ENCODE measurements at regions of chr11 and their contacts with region 1.

Region 1: GRCh38 chr11:62665075-62665598 is at the starts of genes C11orf98 and CSKMT:
- DNase-seq: peak; percentile 91 to 97 (median 94)
- ATAC-seq: peak; percentile 87
- H3K4me3 ChIP-seq: peak within 1 kb of the TSS; percentile 73
- H3K27ac ChIP-seq: peak within 1 kb of the TSS; percentile 80
- H3K4me1 ChIP-seq: peaks cover 19 to 41% of the 10 kb centered on the region in 2 experiments; a peak in 4 of 5 replicates
- H3K27me3 ChIP-seq: no peaks in the 10 kb centered on the region
- CTCF ChIP-seq: no peak
- EP300 ChIP-seq: no peak
- POLR2A ChIP-seq: peak; percentile 100
- RAD21 ChIP-seq: peak in 1 of 2 experiments; percentile 8; a peak in 1 of 4 replicates
- polyA plus RNA-seq, gene C11orf98: 164 to 246 TPM
- polyA plus RNA-seq, gene CSKMT: 26.4 to 31.8 TPM

Region 2: DNA sequence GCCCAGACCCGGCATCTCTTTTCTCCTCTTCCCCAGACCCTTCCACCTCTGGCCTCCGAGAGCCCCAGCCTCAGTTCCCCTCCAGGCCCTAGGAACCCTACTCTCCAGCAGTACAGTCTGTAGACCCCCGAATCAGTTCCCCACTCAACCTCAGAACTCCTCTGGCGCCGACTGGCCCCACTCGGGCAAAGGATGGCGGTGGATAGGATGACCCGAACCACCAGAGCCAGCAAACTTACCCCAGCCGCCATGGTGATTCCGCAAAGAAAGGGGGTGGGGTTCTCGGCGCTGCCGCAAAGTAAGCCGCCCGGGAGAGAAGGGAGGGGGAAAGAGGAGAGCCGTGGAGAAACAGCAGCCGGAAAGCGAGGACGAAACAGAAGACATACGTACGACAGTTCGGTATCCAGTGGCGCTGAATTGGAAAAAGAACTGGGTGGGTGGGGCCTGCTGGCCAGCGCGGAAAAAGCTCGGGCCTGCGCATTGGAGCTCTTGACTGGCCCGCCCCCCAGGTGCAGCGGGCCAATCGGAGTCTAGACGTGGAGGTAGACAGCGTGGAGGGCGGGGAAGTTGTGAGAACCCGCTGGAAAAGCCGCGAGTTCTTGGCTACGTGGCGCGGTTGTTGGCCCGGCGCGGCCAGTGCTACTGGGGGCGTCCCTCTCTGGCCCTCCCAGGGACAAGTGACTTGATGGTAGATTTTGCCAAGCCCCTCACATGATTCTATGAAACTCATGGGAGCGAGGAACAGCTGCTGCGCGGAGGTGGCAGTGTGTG is 91.4 kb before region 1 on chr11 and contains the start of gene EEF1G:
- CTCF ChIA-PET with region 1: no interaction called
- POLR2A ChIA-PET with region 1: interaction called, 12 read pairs
- in situ Hi-C with region 1: no loop called
- intact Hi-C with region 1: no loop called
- DNase-seq: peak; percentile 97 to 99 (median 98)
- ATAC-seq: peak; percentile 97
- H3K4me3 ChIP-seq: peak within 1 kb of the TSS; percentile 96
- H3K27ac ChIP-seq: peak within 1 kb of the TSS; percentile 88
- H3K4me1 ChIP-seq: peaks cover 22 to 40% of the 10 kb centered on the region in 2 experiments; a peak in 4 of 5 replicates
- H3K27me3 ChIP-seq: no peaks in the 10 kb centered on the region
- CTCF ChIP-seq: no peak
- EP300 ChIP-seq: no peak
- POLR2A ChIP-seq: peak; percentile 97
- RAD21 ChIP-seq: no peak
- polyA plus RNA-seq, gene EEF1G: 985 to 1,460 TPM

Region 3: GRCh38 chr11:62621567-62622470 is 43.3 kb before region 1 on chr11 and contains the start of gene B3GAT3:
- CTCF ChIA-PET with region 1: no interaction called
- POLR2A ChIA-PET with region 1: interaction called, 24 read pairs
- in situ Hi-C with region 1: no loop called
- intact Hi-C with region 1: no loop called
- DNase-seq: peak; percentile 97 to 99 (median 98)
- ATAC-seq: peak; percentile 98
- H3K4me3 ChIP-seq: peak within 1 kb of the TSS; percentile 73
- H3K27ac ChIP-seq: peak within 1 kb of the TSS; percentile 84
- H3K4me1 ChIP-seq: peaks cover 12 to 13% of the 10 kb centered on the region in 2 experiments; a peak in 4 of 5 replicates
- H3K27me3 ChIP-seq: no peaks in the 10 kb centered on the region
- CTCF ChIP-seq: peak in 2 of 3 experiments; percentile 8 to 28; a peak in 1 of 6 replicates
- EP300 ChIP-seq: no peak; the same call in 1 of the 2 replicates
- POLR2A ChIP-seq: peak; percentile 79
- RAD21 ChIP-seq: no peak
- polyA plus RNA-seq, gene B3GAT3: 0.30 to 3.3 TPM

Region 4: DNA sequence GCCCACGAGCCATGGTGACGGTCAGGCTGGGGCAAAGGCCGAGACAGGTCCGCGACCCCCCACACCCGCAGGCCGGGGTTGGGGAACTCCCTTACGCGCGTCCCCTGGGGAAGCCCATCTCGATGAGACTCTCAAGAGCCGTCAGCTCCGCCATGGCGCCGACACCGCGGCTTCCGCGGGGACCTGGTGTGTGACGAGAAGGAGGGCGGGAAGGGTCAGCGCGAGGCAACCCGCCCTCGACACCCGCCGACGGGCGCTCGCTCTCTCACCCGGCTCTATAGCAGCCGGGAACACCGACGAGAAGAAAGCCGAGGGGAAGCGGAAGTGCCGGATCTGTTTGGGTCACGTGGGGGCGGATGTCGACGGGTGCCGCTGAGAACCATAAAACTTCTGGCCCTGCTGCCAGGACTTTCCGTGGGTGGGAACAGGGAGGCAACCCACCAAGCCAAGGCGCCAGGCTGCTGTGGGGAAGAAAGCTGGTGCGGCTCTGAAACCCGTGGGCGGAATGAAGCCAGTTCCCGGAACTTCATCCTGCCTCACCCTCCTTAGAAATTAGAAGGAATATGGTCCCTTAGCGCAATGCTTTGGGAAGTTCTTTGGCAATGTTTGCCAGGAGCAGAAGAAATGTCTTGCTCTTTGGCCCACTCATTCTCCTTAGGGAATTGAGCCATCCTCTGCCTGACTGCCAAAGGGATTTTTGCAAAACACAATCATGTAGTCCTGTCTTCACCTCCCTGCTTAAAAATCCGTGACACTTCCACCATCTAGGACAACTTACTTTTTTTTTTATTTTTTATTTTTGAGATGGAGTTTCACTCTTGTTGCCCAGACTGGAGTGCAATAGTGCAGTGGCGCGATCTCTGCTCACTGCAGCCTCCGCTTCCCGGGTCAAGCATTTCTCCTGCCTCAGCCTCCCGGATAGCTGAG is 13.9 kb after region 1 on chr11 and contains the start of gene UBXN1:
- CTCF ChIA-PET with region 1: no interaction called
- POLR2A ChIA-PET with region 1: interaction called, 57 read pairs
- in situ Hi-C with region 1: no loop called
- intact Hi-C with region 1: no loop called
- DNase-seq: peak; percentile 86 to 94 (median 88)
- ATAC-seq: peak; percentile 85
- H3K4me3 ChIP-seq: peak within 1 kb of the TSS; percentile 81
- H3K27ac ChIP-seq: peak within 1 kb of the TSS; percentile 80
- H3K4me1 ChIP-seq: peaks cover 25 to 43% of the 10 kb centered on the region in 2 experiments; a peak in 4 of 5 replicates
- H3K27me3 ChIP-seq: no peaks in the 10 kb centered on the region
- CTCF ChIP-seq: no peak
- EP300 ChIP-seq: no peak; the same call in 1 of the 2 replicates
- POLR2A ChIP-seq: peak; percentile 88
- RAD21 ChIP-seq: 0 out of 4 replicates have a peak, but pooled peaks of 1 of the 2 experiments have one; percentile 5
- polyA plus RNA-seq, gene UBXN1: 4.8 to 10.4 TPM

Region 5: GRCh38 chr11:62726915-62727763 is 62.0 kb after region 1 on chr11 and contains the start of gene HNRNPUL2:
- CTCF ChIA-PET with region 1: no interaction called
- POLR2A ChIA-PET with region 1: interaction called, 11 read pairs
- in situ Hi-C with region 1: no loop called
- intact Hi-C with region 1: no loop called
- DNase-seq: peak; percentile 94 to 99 (median 96)
- ATAC-seq: peak; percentile 90
- H3K4me3 ChIP-seq: peak within 1 kb of the TSS; percentile 90
- H3K27ac ChIP-seq: peak within 1 kb of the TSS; percentile 99
- H3K4me1 ChIP-seq: peaks cover 13 to 19% of the 10 kb centered on the region in 2 experiments; a peak in 4 of 5 replicates
- H3K27me3 ChIP-seq: no peaks in the 10 kb centered on the region
- CTCF ChIP-seq: peak in 1 of 3 experiments; percentile 40; a peak in 2 of 6 replicates
- EP300 ChIP-seq: peak; percentile 0; the same call in 1 of the 2 replicates
- POLR2A ChIP-seq: peak; percentile 95
- RAD21 ChIP-seq: no peak
- polyA plus RNA-seq, gene HNRNPUL2: 0.89 to 1.4 TPM

Region 6: DNA sequence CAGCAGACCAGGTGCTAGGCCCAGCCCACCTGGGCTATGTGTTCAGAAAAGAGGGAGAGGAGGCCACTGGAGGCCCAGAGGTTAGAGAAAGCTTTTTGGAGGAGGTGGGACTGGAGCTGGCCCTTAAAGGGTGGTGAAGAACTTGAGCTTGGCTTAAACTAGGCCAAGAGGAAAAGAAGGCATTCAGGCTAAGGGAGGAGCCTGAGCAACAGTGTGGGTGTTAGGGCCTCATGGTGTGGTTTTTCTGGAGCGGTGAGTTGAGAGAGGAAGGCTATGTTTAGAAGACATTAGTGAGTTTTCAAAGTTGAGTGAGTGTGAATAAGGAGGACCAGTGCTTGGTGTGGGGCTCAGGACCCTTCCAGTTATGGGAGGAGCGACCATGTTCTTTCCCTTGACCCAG is 112.3 kb after region 1 on chr11:
- CTCF ChIA-PET with region 1: no interaction called
- POLR2A ChIA-PET with region 1: no interaction called
- in situ Hi-C with region 1: no loop called
- intact Hi-C with region 1: no loop called
- DNase-seq: peak in 2 of 4 experiments; percentile 2 to 3
- ATAC-seq: no peak
- H3K4me3 ChIP-seq: no peak overlapping the region
- H3K27ac ChIP-seq: no peak overlapping the region
- H3K4me1 ChIP-seq: peaks cover 0 to 3% of the 10 kb centered on the region in 2 experiments; a peak in 2 of 5 replicates
- H3K27me3 ChIP-seq: no peaks in the 10 kb centered on the region
- CTCF ChIP-seq: no peak
- EP300 ChIP-seq: no peak
- POLR2A ChIP-seq: no peak
- RAD21 ChIP-seq: no peak

Region 7: GRCh38 chr11:62880803-62881578 is 215.9 kb after region 1 on chr11 and contains the start of gene SLC3A2:
- CTCF ChIA-PET with region 1: no interaction called
- POLR2A ChIA-PET with region 1: interaction called, 14 read pairs
- in situ Hi-C with region 1: no loop called
- intact Hi-C with region 1: no loop called
- DNase-seq: peak; percentile 83 to 95 (median 86)
- ATAC-seq: peak; percentile 88
- H3K4me3 ChIP-seq: peak within 1 kb of the TSS; percentile 56
- H3K27ac ChIP-seq: peak within 1 kb of the TSS; percentile 95
- H3K4me1 ChIP-seq: peaks cover 56 to 58% of the 10 kb centered on the region in 2 experiments
- H3K27me3 ChIP-seq: no peaks in the 10 kb centered on the region
- CTCF ChIP-seq: peak; percentile 72 to 80 (median 77)
- EP300 ChIP-seq: no peak
- POLR2A ChIP-seq: peak; percentile 99
- RAD21 ChIP-seq: peak; percentile 24 to 43; a peak in 2 of 4 replicates
- polyA plus RNA-seq, gene SLC3A2: 20.0 to 39.7 TPM